CD14-positive monocyte (primary cell): ENCODE measurements at regions of chr11 and their contacts with region 1.

Region 1: DNA sequence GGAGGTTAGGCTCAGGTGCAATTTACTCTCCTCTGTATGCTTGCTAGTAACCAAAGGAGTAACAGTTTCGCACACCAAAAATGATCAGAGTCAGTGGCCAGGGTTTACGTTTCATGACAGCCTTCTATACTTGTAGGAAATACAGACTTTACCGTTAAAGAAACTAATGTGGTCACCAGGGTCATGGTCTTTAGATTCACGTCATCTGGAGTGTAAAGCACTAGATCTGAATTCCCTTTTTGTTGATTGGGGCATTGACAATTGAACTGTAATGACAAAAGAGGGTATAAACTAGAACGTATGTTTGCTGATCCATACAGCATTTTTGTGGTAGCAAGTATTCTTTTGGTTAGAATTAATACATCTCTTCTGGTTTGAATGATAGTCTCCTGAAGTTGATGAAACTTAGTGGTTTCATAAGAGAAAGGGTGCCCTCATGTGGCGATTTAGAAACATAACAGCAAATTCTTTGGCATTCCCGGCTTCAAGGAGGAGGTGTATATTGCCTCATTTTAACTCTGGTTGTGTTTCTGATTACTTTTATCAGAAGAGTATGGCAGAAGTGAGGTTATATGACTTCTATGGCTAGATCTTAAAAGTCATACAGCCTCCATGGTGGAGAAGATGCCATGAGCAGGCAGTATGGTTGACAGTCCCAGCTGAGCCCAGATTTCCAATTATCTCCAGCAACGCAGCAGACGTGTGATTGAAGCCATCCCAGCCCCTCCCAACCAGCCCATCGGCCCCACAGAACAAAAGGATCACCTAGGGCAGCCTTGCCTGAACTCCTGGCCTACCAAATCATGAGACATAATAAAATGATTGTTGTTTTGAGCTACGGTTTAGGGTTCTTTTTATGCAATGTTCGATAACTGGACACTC is 35.1 kb downstream of the MMP7 start:
- DNase-seq: peak; percentile 57 to 83 (median 78)
- H3K4me3 ChIP-seq: no peak overlapping the region
- H3K4me3 Mint-ChIP-seq: no peak overlapping the region
- H3K27ac ChIP-seq: no peak overlapping the region
- H3K27ac Mint-ChIP-seq: no peak overlapping the region
- H3K4me1 ChIP-seq: no peaks in the 10 kb centered on the region
- H3K4me1 Mint-ChIP-seq: no peaks in the 10 kb centered on the region
- H3K27me3 ChIP-seq: no peaks in the 10 kb centered on the region
- H3K27me3 Mint-ChIP-seq: peaks cover 0 to 3% (median 2%) of the 10 kb centered on the region in 3 donors
- CTCF ChIP-seq: peak; percentile 77

Region 2: DNA sequence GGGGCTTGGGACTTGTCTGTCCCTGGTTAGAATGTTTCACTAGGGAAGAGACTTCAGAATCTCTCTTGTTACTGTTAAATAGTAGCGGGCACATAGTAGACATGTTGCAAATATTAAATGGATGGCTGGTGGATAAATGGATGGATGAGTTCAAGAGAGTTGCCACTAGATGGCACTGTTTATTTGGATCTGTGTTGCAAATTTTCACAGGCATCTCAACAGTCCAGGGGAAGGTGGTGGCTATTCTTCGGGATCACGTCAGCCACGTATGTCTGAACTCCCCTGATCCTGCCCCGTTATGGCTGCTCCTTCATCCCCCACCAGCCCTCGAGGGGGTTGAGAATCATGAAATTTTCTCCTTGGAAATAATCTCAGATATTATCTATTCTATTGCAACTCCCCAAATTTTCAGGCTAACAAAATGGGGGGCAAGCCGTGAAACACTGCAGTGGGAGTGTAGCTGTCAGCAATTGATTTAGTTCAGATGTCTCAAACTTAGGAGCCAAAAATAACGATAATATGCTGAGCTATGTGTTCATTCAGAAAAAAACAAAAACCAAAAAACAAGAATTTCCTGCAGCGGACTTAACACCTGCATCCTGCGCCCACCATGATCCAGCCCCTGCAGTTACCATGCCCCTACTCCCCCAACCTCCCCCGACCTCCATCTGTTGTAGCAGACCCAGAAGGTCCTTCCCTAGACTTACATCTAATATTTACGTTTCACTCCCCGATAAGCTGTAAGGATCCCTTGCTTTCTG is 207.3 kb before region 1 on chr11:
- intact Hi-C with region 1: loop called (anchors 10 kb)
- DNase-seq: peak; percentile 66 to 82 (median 80)
- H3K4me3 ChIP-seq: peak overlapping the region in 1 of 3 experiments; percentile 28
- H3K4me3 Mint-ChIP-seq: peak overlapping the region in 1 of 2 donors; percentile 15
- H3K27ac ChIP-seq: peak overlapping the region in 1 of 2 donors; percentile 29
- H3K27ac Mint-ChIP-seq: peak overlapping the region; percentile 29 to 87 (median 63)
- H3K4me1 ChIP-seq: peaks cover 22 to 29% of the 10 kb centered on the region in 2 donors
- H3K4me1 Mint-ChIP-seq: peaks cover 28% of the 10 kb centered on the region
- H3K27me3 ChIP-seq: no peaks in the 10 kb centered on the region
- H3K27me3 Mint-ChIP-seq: peaks cover 2 to 3% (median 2%) of the 10 kb centered on the region in 3 donors
- CTCF ChIP-seq: peak; percentile 78

Region 3: DNA sequence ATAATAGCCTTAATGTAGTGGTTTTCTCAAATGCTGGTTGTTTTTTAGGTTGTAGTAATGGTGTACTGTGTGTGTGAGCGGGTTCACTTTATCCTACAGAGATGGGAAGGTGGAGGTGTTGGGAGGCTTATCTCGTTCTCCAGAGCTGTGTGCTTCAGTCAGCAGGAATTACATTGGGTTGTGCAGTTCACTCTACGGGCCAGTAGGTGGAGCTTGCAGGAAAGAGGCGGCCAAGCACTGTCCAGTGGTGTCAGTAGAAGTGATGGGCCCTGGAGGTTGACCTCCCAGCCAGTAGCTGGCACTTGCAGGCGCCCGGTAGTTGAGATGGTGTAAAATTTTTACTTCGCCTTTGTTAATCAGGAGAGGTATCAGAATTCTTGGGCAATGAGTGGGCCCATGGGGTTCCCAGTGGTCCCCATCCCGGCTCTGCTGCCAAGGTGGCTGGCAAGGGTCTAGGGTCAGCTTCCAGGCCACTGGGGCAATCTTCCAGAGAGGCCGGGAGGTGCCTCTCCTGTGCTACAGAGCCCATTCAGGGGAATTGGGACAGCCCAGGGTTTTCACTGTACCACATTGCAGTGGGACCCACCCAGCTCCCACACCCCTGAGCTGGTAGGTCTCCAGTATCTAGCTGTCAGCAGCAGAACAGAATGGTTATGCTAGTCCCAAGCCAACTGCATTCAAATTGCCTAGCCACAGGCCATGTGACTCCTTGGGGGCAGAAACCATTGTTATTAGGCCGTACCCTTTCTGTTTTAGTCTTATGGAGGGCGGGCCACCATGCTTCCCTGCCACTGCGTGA is 104.5 kb before region 1 on chr11:
- intact Hi-C with region 1: loop called (anchors 5 kb)
- DNase-seq: peak; percentile 51 to 74 (median 61)
- H3K4me3 ChIP-seq: no peak overlapping the region
- H3K4me3 Mint-ChIP-seq: no peak overlapping the region
- H3K27ac ChIP-seq: peak overlapping the region in 1 of 2 donors; percentile 32
- H3K27ac Mint-ChIP-seq: peak overlapping the region in 2 of 7 donors; percentile 14 to 17
- H3K4me1 ChIP-seq: no peaks in the 10 kb centered on the region
- H3K4me1 Mint-ChIP-seq: peaks cover 5% of the 10 kb centered on the region
- H3K27me3 ChIP-seq: no peaks in the 10 kb centered on the region
- H3K27me3 Mint-ChIP-seq: no peaks in the 10 kb centered on the region
- CTCF ChIP-seq: peak; percentile 90